ENCODE measurements at regions of chr3 and their contacts with region 1.

Region 1: GRCh38 chr3:159828542-159828943 is 160.1 kb upstream of the IL12A start:
- DNase-seq: no peak
- ATAC-seq: peak; percentile 69
- H3K4me3 Mint-ChIP-seq: no peak overlapping the region
- H3K27ac Mint-ChIP-seq: no peak overlapping the region
- H3K4me1 Mint-ChIP-seq: peaks cover 2% of the 10 kb centered on the region; the same call in 1 of the 2 replicates
- H3K27me3 Mint-ChIP-seq: no peaks in the 10 kb centered on the region
- CTCF ChIP-seq: peak; percentile 42; the same call in 1 of the 2 replicates

Region 2: GRCh38 chr3:159839561-159840379 is 11.2 kb after region 1 on chr3:
- CTCF ChIA-PET with region 1: interaction called, 12 read pairs
- POLR2A ChIA-PET with region 1: no interaction called
- DNase-seq: peak; percentile 75
- ATAC-seq: peak; percentile 100
- H3K4me3 Mint-ChIP-seq: peak within 1 kb of the TSS; percentile 73
- H3K27ac Mint-ChIP-seq: peak within 1 kb of the TSS; percentile 92
- H3K4me1 Mint-ChIP-seq: peaks cover 41% of the 10 kb centered on the region
- H3K27me3 Mint-ChIP-seq: no peaks in the 10 kb centered on the region
- CTCF ChIP-seq: no peak

Region 3: GRCh38 chr3:159852821-159853505 is 24.4 kb after region 1 on chr3:
- CTCF ChIA-PET with region 1: interaction called, 11 read pairs
- POLR2A ChIA-PET with region 1: no interaction called
- DNase-seq: peak; percentile 35
- ATAC-seq: peak; percentile 77
- H3K4me3 Mint-ChIP-seq: no peak overlapping the region
- H3K27ac Mint-ChIP-seq: peak overlapping the region; percentile 94
- H3K4me1 Mint-ChIP-seq: peaks cover 41% of the 10 kb centered on the region
- H3K27me3 Mint-ChIP-seq: no peaks in the 10 kb centered on the region
- CTCF ChIP-seq: no peak

Region 4: DNA sequence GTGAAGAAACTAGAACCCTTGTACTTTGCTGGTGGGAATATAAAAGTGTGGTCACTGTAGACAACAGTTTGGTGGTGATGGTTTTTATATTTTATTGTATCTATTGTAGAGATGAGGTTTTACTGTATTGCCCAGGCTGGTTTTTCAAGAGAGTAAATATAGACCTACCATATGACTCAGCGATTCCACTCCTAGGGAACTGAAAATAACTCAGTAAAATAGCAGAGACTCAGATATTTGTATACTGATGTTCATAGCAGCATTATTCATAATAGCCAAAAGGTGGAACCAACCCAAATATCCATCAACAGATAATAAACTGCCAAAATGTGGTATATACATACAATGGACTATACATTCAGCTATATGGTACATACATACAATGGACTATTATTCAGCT is 91.3 kb after region 1 on chr3:
- CTCF ChIA-PET with region 1: no interaction called
- POLR2A ChIA-PET with region 1: no interaction called
- DNase-seq: no peak
- ATAC-seq: no peak
- H3K4me3 Mint-ChIP-seq: no peak overlapping the region
- H3K27ac Mint-ChIP-seq: no peak overlapping the region
- H3K4me1 Mint-ChIP-seq: no peaks in the 10 kb centered on the region
- H3K27me3 Mint-ChIP-seq: no peaks in the 10 kb centered on the region
- CTCF ChIP-seq: no peak

Region 5: DNA sequence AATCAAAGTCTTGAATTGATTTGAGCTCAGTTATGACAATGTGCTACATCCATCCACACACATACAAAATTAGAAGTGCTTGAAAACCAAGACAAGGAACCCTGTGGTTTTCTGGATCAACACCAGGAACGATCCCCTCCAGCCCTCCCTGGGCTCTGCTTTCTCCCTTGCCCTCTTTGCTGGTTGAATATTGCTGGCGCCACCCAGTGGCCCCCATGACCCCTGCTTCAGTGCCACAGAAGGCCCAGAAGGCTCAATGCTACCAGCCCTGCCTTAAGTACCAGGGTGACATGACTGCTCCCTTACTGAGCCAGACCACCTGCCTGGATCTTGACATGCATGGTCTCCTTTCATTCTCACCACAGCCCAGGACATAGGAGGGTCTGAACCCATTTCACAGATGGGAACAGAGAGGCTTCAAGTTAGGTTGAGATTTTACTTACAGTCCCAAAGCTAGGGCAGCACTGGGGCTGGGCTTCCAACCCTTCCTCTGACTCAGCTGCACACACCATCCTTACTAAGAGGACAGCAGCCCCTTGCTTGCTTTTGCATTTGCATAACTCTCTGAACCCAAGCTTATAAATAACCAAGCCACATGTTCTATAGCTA is 175.1 kb after region 1 on chr3:
- CTCF ChIA-PET with region 1: interaction called, 24 read pairs
- POLR2A ChIA-PET with region 1: no interaction called
- DNase-seq: peak; percentile 78
- ATAC-seq: peak; percentile 97
- H3K4me3 Mint-ChIP-seq: no peak overlapping the region
- H3K27ac Mint-ChIP-seq: no peak overlapping the region
- H3K4me1 Mint-ChIP-seq: peaks cover 17% of the 10 kb centered on the region
- H3K27me3 Mint-ChIP-seq: no peaks in the 10 kb centered on the region
- CTCF ChIP-seq: peak; percentile 35; the same call in 1 of the 2 replicates